ENCODE measurements at regions of chr1 and their contacts with region 1.

Region 1: GRCh38 chr1:33349778-33350610 is 29.1 kb upstream of the A3GALT2 start:
- DNase-seq: peak; percentile 64 to 92 (median 75)
- ATAC-seq: peak; percentile 86
- H3K4me3 ChIP-seq: peak overlapping the region; percentile 82 to 93
- H3K4me3 Mint-ChIP-seq: peak overlapping the region; percentile 91
- H3K27ac ChIP-seq: peak overlapping the region; percentile 63 to 75
- H3K27ac Mint-ChIP-seq: peak overlapping the region; percentile 76
- H3K4me1 ChIP-seq: peaks cover 32% of the 10 kb centered on the region
- H3K4me1 Mint-ChIP-seq: peaks cover 48% of the 10 kb centered on the region
- H3K27me3 ChIP-seq: no peaks in the 10 kb centered on the region
- H3K27me3 Mint-ChIP-seq: no peaks in the 10 kb centered on the region
- CTCF ChIP-seq: no peak

Region 2: DNA sequence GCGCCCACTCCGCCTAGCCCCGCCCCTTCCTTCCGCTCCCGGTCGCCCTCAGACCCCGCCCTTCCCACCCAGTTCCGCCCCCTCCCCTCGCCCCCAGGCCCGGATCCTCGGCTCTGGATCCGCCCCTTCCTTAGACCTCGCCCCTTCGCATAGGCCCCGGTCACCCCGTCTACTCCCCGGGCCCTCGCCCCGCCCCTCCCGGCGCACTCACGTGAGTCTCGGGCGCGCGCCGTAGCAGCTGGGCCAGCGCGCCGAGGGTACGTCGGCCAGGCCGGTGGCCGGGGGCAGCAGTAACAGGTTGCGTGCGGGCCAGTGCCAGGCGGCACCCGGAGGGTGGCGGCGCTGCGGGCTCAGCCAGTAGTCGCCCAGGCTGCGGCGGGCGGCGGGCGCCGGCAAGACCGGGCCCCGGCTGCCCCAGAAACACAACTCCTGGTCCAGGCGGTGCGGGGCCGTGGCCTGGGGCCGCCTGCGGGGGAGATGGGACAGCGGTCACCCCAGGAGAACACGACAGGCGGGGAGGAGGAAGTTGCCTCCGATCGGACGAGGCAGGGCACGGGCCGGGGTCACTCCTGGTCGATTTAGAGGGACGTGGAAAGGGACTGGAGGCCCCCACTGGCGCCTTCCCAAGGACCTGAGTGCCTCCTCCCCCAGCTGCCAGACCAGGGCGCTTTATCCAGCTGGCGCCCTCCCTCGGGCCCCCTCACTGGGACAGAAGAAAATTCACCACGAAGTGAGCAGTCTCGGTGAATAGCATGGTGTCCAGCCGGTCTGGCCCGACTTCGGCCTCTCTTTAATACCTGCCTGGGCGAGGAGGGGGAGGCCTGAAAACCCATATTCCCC is 998.4 kb before region 1 on chr1:
- CTCF ChIA-PET with region 1: no interaction called
- POLR2A ChIA-PET with region 1: no interaction called
- intact Hi-C with region 1: loop called in 1 of 2 experiments (anchors 5 kb)
- DNase-seq: peak; percentile 81 to 97 (median 90)
- ATAC-seq: peak; percentile 95
- H3K4me3 ChIP-seq: peak overlapping the region; percentile 57 to 85
- H3K4me3 Mint-ChIP-seq: peak overlapping the region; percentile 81
- H3K27ac ChIP-seq: peak overlapping the region; percentile 60 to 69
- H3K27ac Mint-ChIP-seq: peak overlapping the region; percentile 49
- H3K4me1 ChIP-seq: peaks cover 30% of the 10 kb centered on the region
- H3K4me1 Mint-ChIP-seq: peaks cover 49% of the 10 kb centered on the region
- H3K27me3 ChIP-seq: no peaks in the 10 kb centered on the region
- H3K27me3 Mint-ChIP-seq: no peaks in the 10 kb centered on the region
- CTCF ChIP-seq: no peak

Region 3: DNA sequence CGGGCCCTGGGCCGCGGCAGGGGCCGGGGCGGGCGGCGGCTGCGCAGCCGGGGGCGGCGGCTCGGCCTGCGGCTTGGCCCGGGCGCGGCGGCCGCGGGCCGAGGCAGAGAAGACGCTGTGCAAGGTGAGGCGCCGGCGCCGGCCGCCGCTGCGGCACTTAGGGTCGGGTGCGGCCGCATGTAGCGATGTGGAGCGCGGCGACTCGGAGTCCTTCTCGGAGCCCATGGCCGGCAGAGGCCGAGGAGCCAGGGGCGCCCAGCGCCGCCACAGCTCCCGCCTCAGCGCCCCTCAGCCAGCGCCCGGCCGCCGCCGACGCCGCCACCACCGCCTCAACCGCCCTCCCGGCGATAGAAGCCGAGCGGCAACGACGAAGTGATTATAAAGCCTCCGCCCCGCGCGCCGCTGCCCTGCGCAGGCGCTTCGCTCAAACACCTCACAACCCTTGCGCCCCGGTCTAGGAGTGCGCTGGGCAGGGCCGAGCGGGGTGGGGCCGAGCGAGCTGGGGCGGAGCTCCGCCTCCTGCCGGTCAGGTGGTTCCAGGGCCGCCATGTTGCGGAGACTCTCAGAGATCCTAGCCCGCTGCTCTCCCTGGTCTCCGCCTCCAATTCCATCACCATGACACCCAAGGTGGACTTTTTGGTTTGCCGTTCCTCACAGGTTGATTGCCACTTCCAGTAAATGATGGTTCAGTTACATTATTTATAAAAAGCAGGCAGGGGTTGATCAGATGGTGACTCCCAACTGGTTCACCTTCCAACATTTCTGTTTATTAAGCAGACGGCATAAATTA is 385.3 kb before region 1 on chr1 and contains the start of gene RNF19B:
- CTCF ChIA-PET with region 1: no interaction called
- POLR2A ChIA-PET with region 1: no interaction called
- intact Hi-C with region 1: loop called (anchors 5 to 10 kb)
- DNase-seq: peak; percentile 89 to 97 (median 93)
- ATAC-seq: peak; percentile 93
- H3K4me3 ChIP-seq: peak within 1 kb of the TSS; percentile 68 to 70
- H3K4me3 Mint-ChIP-seq: peak within 1 kb of the TSS; percentile 88
- H3K27ac ChIP-seq: peak within 1 kb of the TSS; percentile 51 to 75
- H3K27ac Mint-ChIP-seq: peak within 1 kb of the TSS; percentile 91
- H3K4me1 ChIP-seq: peaks cover 24% of the 10 kb centered on the region
- H3K4me1 Mint-ChIP-seq: peaks cover 38% of the 10 kb centered on the region
- H3K27me3 ChIP-seq: peaks cover 0 to 3% of the 10 kb centered on the region in 2 experiments
- H3K27me3 Mint-ChIP-seq: no peaks in the 10 kb centered on the region
- CTCF ChIP-seq: no peak
- total RNA-seq, gene RNF19B: 43.9 to 44.6 TPM

Region 4: GRCh38 chr1:33181921-33182341 is 168.1 kb before region 1 on chr1 and contains the start of gene TRIM62:
- CTCF ChIA-PET with region 1: no interaction called
- POLR2A ChIA-PET with region 1: no interaction called
- intact Hi-C with region 1: loop called in 1 of 2 experiments (anchors 2 kb)
- DNase-seq: peak; percentile 48 to 88 (median 74)
- ATAC-seq: peak; percentile 74
- H3K4me3 ChIP-seq: peak within 1 kb of the TSS; percentile 82 to 85
- H3K4me3 Mint-ChIP-seq: peak within 1 kb of the TSS; percentile 88
- H3K27ac ChIP-seq: peak within 1 kb of the TSS in 1 of 2 experiments; percentile 36
- H3K27ac Mint-ChIP-seq: peak within 1 kb of the TSS; percentile 74
- H3K4me1 ChIP-seq: peaks cover 22% of the 10 kb centered on the region
- H3K4me1 Mint-ChIP-seq: peaks cover 31% of the 10 kb centered on the region
- H3K27me3 ChIP-seq: no peaks in the 10 kb centered on the region
- H3K27me3 Mint-ChIP-seq: peaks cover 6% of the 10 kb centered on the region
- CTCF ChIP-seq: no peak
- total RNA-seq, gene TRIM62: 14.3 to 14.8 TPM

Region 5: DNA sequence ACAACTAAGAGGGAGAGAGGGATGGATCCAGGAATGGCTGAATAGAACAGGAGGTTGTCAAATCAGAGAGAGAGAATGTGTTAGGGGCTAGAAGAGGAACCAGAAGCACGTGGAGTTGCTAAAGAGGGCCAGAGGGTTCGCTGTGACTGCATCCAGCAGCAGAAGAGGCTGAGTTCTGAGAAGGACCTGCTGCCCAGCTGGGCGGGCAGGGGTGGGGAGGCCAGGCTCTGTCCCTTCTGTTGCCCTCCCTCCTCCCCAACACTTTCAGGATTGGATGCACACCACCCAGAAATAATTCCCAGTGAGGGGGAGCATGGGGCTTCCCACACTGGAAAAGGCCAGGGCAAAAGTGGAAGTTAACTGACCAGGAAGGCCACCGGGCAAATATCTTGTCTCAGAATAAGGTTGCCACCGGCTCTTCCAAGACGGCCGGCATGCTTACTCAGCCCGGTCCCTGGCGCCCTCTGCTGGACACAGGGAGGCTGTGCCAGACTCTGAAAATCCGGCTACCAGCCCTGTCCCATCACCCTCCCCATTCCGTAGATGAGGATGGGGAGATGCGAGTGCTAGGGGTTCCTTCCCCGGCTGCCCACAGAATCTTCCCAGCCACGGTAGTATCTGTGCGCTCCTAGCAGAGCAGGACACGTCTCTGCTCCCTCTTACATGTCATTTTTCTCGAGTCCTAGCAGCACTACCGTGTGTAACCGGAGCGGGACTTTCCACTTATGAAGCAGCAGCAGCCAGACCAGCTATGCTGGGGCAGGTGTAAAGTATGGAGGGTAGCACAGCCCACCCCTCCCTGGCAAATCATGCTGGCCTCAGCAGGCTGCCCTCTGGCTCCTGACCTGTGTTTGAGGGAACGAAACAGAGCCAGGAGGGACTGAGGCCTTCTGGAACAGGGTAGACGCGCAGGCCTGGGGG is 17.8 kb after region 1 on chr1:
- CTCF ChIA-PET with region 1: interaction called, 7 read pairs
- POLR2A ChIA-PET with region 1: no interaction called
- intact Hi-C with region 1: loop called in 1 of 2 experiments (anchors 1 kb)
- DNase-seq: peak; percentile 72 to 92 (median 86)
- ATAC-seq: peak; percentile 99
- H3K4me3 ChIP-seq: no peak overlapping the region
- H3K4me3 Mint-ChIP-seq: no peak overlapping the region
- H3K27ac ChIP-seq: no peak overlapping the region
- H3K27ac Mint-ChIP-seq: no peak overlapping the region
- H3K4me1 ChIP-seq: no peaks in the 10 kb centered on the region
- H3K4me1 Mint-ChIP-seq: peaks cover 1% of the 10 kb centered on the region
- H3K27me3 ChIP-seq: no peaks in the 10 kb centered on the region
- H3K27me3 Mint-ChIP-seq: no peaks in the 10 kb centered on the region
- CTCF ChIP-seq: peak; percentile 86

Region 6: DNA sequence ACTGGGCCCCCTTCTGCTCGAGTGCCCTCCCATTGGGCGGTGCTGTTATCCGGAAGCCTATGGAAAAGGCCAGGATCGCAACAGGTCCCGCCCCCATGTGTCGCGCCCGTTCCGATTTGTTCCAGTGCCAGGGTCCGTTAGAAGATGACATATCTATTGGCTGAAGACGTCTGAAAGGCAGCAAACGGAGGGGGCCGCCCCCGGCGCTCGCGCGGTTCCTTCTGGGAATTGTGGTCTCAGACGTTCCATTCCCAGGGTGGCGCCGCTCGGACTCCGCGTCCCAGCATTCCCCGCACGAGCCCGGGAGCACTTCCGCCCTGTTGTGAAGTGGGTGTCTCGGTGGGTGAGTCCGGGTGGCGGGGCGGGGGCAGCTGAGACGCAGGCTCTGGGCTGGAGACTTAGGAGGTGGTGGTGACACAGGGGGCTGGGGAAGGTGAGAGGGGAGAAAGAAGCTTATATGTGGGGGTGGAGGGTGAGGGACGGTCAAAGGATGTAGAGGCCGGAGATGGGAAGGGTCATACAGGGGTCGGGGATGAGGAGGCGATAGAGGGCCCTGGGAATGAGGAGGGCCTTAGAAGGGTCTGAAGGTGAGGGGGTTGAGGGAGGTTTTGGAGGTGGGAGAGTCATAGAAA is 122.5 kb after region 1 on chr1 and contains the start of gene ZSCAN20:
- CTCF ChIA-PET with region 1: no interaction called
- POLR2A ChIA-PET with region 1: interaction called, 3 read pairs
- intact Hi-C with region 1: loop called (anchors 2 to 5 kb)
- DNase-seq: peak; percentile 59 to 92 (median 84)
- ATAC-seq: peak; percentile 98
- H3K4me3 ChIP-seq: peak within 1 kb of the TSS; percentile 29 to 49
- H3K4me3 Mint-ChIP-seq: peak within 1 kb of the TSS; percentile 87
- H3K27ac ChIP-seq: peak within 1 kb of the TSS in 1 of 2 experiments; percentile 67
- H3K27ac Mint-ChIP-seq: peak within 1 kb of the TSS; percentile 80
- H3K4me1 ChIP-seq: peaks cover 10% of the 10 kb centered on the region
- H3K4me1 Mint-ChIP-seq: peaks cover 31% of the 10 kb centered on the region
- H3K27me3 ChIP-seq: no peaks in the 10 kb centered on the region
- H3K27me3 Mint-ChIP-seq: no peaks in the 10 kb centered on the region
- CTCF ChIP-seq: no peak
- total RNA-seq, gene ZSCAN20: 0.19 TPM

Region 7: GRCh38 chr1:34213956-34214355 is 864.0 kb after region 1 on chr1:
- CTCF ChIA-PET with region 1: no interaction called
- POLR2A ChIA-PET with region 1: no interaction called
- intact Hi-C with region 1: no loop called
- DNase-seq: no peak
- ATAC-seq: no peak
- H3K4me3 ChIP-seq: no peak overlapping the region
- H3K4me3 Mint-ChIP-seq: no peak overlapping the region
- H3K27ac ChIP-seq: no peak overlapping the region
- H3K27ac Mint-ChIP-seq: no peak overlapping the region
- H3K4me1 ChIP-seq: no peaks in the 10 kb centered on the region
- H3K4me1 Mint-ChIP-seq: no peaks in the 10 kb centered on the region
- H3K27me3 ChIP-seq: no peaks in the 10 kb centered on the region
- H3K27me3 Mint-ChIP-seq: peaks cover 6% of the 10 kb centered on the region
- CTCF ChIP-seq: no peak

Measured in CD8-positive, alpha-beta T cell (primary cell).